ENCODE measurements at regions of chr2 and their contacts with region 1.

Region 1: GRCh38 chr2:95728878-95729596 is 137.2 kb downstream of the TRIM43 start:
- DNase-seq: peak in 4 of 5 donors; percentile 55 to 66 (median 62)
- ATAC-seq: peak; percentile 87 to 96 (median 93)
- H3K4me3 ChIP-seq: no peak overlapping the region
- H3K27ac ChIP-seq: no peak overlapping the region
- H3K4me1 ChIP-seq: no peaks in the 10 kb centered on the region
- H3K27me3 ChIP-seq: peaks cover 0 to 7% (median 0%) of the 10 kb centered on the region in 9 donors
- CTCF ChIP-seq: peak; percentile 44 to 76 (median 71)
- POLR2A ChIP-seq: no peak

Region 2: DNA sequence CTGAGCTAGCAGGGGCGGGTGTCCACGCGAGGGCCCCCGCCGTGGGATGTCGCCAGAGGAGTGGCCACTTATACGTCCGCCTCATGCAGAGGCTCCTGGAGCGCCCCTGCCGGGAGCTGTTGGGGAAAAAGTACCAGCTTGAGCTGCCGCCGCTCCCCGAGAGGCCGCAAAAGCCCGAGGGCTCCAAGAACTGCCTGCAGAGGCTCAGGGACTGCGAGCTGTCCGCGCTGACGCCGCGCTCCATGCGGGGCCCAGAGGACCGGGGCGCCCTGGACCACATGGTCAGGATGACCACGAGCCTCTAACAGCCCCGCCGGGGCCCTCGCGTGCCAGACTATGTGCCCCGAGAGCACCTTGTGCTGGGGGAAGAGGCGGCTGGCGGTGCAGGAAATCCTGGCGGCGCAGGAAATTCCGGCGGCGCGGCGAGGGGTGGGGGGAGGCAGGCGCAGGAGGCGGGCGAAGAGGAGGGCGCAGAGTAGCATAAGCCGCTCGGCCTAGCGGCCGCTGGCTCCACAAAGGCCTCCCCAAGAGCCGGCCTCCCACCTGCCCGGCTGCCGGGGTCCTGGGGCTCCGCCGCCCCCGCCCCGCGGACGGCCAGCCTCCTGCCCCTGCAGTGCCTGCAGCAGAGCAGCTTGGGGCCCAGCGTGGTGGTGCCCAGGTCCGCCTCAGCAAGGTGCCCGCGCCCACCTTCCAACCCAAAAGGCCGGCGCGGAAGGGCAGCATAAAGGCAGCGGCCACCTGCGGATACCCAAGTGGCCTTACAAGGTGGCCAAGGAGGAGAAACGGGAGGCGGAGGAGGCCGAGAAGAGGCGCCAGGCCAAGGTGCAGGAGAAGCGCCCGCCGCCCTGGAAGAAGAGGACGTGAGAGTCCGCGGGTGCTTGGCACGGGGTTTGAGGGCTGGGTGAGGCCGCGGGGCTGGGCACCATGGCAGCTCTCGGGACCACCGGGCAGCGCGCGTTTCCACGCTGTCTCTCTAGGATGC is 202.4 kb before region 1 on chr2:
- intact Hi-C with region 1: loop called in 1 of 10 experiments (anchors 5 kb)
- DNase-seq: peak; percentile 75 to 89 (median 82)
- ATAC-seq: peak; percentile 80 to 98 (median 92)
- H3K4me3 ChIP-seq: peak overlapping the region; percentile 56 to 95 (median 83)
- H3K27ac ChIP-seq: peak overlapping the region; percentile 67 to 91 (median 82)
- H3K4me1 ChIP-seq: peaks cover 0 to 21% (median 15%) of the 10 kb centered on the region in 12 donors
- H3K27me3 ChIP-seq: no peaks in the 10 kb centered on the region
- CTCF ChIP-seq: peak in 8 of 12 donors; percentile 21 to 52 (median 34)
- POLR2A ChIP-seq: peak in 1 of 2 donors; percentile 47

Region 3: GRCh38 chr2:95685513-95685912 is 43.5 kb before region 1 on chr2:
- intact Hi-C with region 1: no loop called
- DNase-seq: no peak
- ATAC-seq: no peak
- H3K4me3 ChIP-seq: no peak overlapping the region
- H3K27ac ChIP-seq: no peak overlapping the region
- H3K4me1 ChIP-seq: peaks cover 0 to 20% (median 6%) of the 10 kb centered on the region in 12 donors
- H3K27me3 ChIP-seq: no peaks in the 10 kb centered on the region
- CTCF ChIP-seq: no peak
- POLR2A ChIP-seq: no peak

Region 4: GRCh38 chr2:95760806-95761530 is 31.9 kb after region 1 on chr2:
- intact Hi-C with region 1: no loop called
- DNase-seq: no peak
- ATAC-seq: no peak
- H3K4me3 ChIP-seq: no peak overlapping the region
- H3K27ac ChIP-seq: no peak overlapping the region
- H3K4me1 ChIP-seq: no peaks in the 10 kb centered on the region
- H3K27me3 ChIP-seq: no peaks in the 10 kb centered on the region
- CTCF ChIP-seq: no peak
- POLR2A ChIP-seq: no peak

Region 5: DNA sequence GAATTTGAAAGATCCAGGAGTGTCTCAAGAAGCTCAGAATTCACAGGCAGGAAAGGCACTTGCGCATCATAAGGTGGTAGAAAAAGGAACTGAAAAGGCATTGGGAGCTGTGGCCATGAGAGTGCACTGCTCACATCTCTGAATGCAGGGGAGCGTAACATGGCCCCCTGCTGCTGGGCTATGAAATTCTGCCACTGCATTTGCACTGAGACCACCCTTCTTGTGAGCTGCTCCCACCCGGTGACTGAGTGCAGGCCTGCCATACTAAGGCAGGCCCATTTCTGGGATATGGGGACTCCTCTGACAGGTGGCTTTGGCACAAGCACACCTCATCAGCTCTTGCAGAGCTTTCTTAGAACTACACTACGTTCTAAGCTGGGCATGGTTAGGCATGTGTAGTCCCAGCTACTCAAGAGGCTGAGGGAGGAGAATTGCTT is 504.9 kb after region 1 on chr2:
- intact Hi-C with region 1: no loop called
- DNase-seq: no peak
- ATAC-seq: no peak
- H3K4me3 ChIP-seq: no peak overlapping the region
- H3K27ac ChIP-seq: no peak overlapping the region
- H3K4me1 ChIP-seq: peaks cover 0 to 12% (median 0%) of the 10 kb centered on the region in 12 donors
- H3K27me3 ChIP-seq: no peaks in the 10 kb centered on the region
- CTCF ChIP-seq: no peak
- POLR2A ChIP-seq: no peak

Measured in heart left ventricle (tissue), 16 donors.